Panc1 (cell line): ENCODE measurements at regions of chr4 and their contacts with region 1.

Region 1: GRCh38 chr4:55758570-55758969 is 61.0 kb upstream of the EXOC1L start:
- DNase-seq: no peak
- ATAC-seq: 0 out of 2 replicates have a peak, but pooled peaks have one; percentile 38
- H3K4me3 ChIP-seq: no peak overlapping the region
- H3K27ac ChIP-seq: no peak overlapping the region
- H3K4me1 ChIP-seq: no peaks in the 10 kb centered on the region
- H3K27me3 ChIP-seq: no peaks in the 10 kb centered on the region
- CTCF ChIP-seq: no peak

Region 2: GRCh38 chr4:56212774-56213173 is 454.2 kb after region 1 on chr4:
- CTCF ChIA-PET with region 1: no interaction called
- POLR2A ChIA-PET with region 1: interaction called, 11 read pairs
- in situ Hi-C with region 1: no loop called
- intact Hi-C with region 1: no loop called
- DNase-seq: no peak
- ATAC-seq: no peak
- H3K4me3 ChIP-seq: no peak overlapping the region
- H3K27ac ChIP-seq: no peak overlapping the region
- H3K4me1 ChIP-seq: no peaks in the 10 kb centered on the region
- H3K27me3 ChIP-seq: no peaks in the 10 kb centered on the region
- CTCF ChIP-seq: no peak